ENCODE measurements at regions of chr3 and their contacts with region 1.

Region 1: GRCh38 chr3:148075763-148076716 is 621.7 kb upstream of the AGTR1 start:
- DNase-seq: peak; percentile 44
- H3K4me3 Mint-ChIP-seq: no peak overlapping the region
- H3K27ac Mint-ChIP-seq: no peak overlapping the region
- H3K4me1 Mint-ChIP-seq: no peaks in the 10 kb centered on the region
- H3K27me3 Mint-ChIP-seq: no peaks in the 10 kb centered on the region
- CTCF ChIP-seq: peak; percentile 74

Region 2: DNA sequence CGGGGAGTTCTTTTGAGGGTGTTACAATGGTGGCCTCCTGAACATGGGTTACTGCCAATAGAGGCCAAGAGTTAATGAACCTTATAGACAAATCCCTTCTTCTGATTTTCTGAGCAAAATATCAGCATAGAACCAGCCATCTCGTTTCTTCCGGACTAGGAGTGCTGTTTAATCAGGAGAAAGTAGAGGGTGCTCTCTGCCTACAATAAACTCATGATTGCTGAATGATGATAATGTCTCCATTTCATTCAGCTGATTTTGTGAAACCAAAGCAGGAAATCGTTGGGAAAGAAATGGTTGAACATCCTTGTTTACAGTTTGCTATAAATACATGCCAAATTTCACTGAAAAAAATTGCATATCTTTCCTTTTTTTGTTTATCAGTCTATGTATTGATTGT is 1328.1 kb before region 1 on chr3:
- CTCF ChIA-PET with region 1: no interaction called
- intact Hi-C with region 1: loop called (anchors 2 kb)
- DNase-seq: peak; percentile 20
- H3K4me3 Mint-ChIP-seq: no peak overlapping the region
- H3K27ac Mint-ChIP-seq: no peak overlapping the region
- H3K4me1 Mint-ChIP-seq: no peaks in the 10 kb centered on the region
- H3K27me3 Mint-ChIP-seq: no peaks in the 10 kb centered on the region
- CTCF ChIP-seq: no peak

Region 3: GRCh38 chr3:147191795-147192385 is 884.1 kb before region 1 on chr3:
- CTCF ChIA-PET with region 1: no interaction called
- intact Hi-C with region 1: loop called (anchors 2 kb)
- DNase-seq: peak; percentile 81
- H3K4me3 Mint-ChIP-seq: no peak overlapping the region
- H3K27ac Mint-ChIP-seq: no peak overlapping the region
- H3K4me1 Mint-ChIP-seq: no peaks in the 10 kb centered on the region
- H3K27me3 Mint-ChIP-seq: no peaks in the 10 kb centered on the region
- CTCF ChIP-seq: peak; percentile 97

Region 4: GRCh38 chr3:147507638-147508286 is 568.3 kb before region 1 on chr3:
- CTCF ChIA-PET with region 1: no interaction called
- intact Hi-C with region 1: loop called (anchors 5 kb)
- DNase-seq: no peak
- H3K4me3 Mint-ChIP-seq: no peak overlapping the region
- H3K27ac Mint-ChIP-seq: no peak overlapping the region
- H3K4me1 Mint-ChIP-seq: no peaks in the 10 kb centered on the region
- H3K27me3 Mint-ChIP-seq: no peaks in the 10 kb centered on the region
- CTCF ChIP-seq: no peak

Region 5: DNA sequence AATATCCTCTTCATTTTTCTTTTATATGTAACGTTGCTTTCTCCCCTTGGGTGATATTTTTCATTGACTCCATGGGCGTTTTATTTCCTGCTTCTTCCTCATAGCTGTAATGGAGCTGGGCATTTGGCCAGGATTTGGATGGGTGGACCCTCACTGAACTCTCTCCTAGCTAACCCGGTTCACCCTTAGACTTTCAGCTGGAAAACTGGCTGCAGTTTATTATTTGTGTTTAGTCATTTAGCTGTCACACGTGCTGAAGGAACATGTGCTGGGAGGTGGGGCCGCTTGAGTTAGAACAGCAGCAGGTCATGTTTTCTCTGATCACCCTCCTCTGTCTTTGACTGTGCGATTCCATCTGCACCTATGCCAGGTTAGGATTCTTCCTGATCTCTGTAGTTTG is 259.3 kb before region 1 on chr3:
- CTCF ChIA-PET with region 1: interaction called, 11 read pairs
- intact Hi-C with region 1: loop called (anchors 5 kb)
- DNase-seq: peak; percentile 88
- H3K4me3 Mint-ChIP-seq: peak overlapping the region; percentile 25
- H3K27ac Mint-ChIP-seq: peak overlapping the region; percentile 84
- H3K4me1 Mint-ChIP-seq: peaks cover 14% of the 10 kb centered on the region
- H3K27me3 Mint-ChIP-seq: no peaks in the 10 kb centered on the region
- CTCF ChIP-seq: no peak

Region 6: DNA sequence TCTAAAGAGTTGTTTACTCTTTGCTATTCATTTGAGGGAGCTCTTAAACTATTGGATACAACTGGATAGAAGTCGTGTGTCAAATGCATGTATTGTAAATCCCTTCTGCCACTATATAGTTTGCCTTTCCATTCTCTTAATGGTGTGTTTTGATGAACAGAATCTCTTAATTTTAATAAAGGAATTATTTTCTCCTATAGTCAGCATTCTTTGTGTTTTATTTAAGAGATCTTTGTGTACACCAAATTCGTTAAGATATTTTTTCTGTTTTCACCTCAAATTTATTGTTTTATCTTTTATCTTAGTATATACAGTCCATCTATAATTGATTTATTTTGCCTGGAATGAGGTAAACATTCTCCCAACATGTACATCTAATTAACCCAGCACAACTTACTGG is 70.2 kb after region 1 on chr3:
- CTCF ChIA-PET with region 1: no interaction called
- intact Hi-C with region 1: no loop called
- DNase-seq: no peak
- H3K4me3 Mint-ChIP-seq: no peak overlapping the region
- H3K27ac Mint-ChIP-seq: peak overlapping the region; percentile 14
- H3K4me1 Mint-ChIP-seq: peaks cover 22% of the 10 kb centered on the region
- H3K27me3 Mint-ChIP-seq: no peaks in the 10 kb centered on the region
- CTCF ChIP-seq: no peak

Region 7: GRCh38 chr3:148366743-148367410 is 290.8 kb after region 1 on chr3:
- CTCF ChIA-PET with region 1: interaction called, 8 read pairs
- intact Hi-C with region 1: loop called (anchors 1 kb)
- DNase-seq: no peak
- H3K4me3 Mint-ChIP-seq: no peak overlapping the region
- H3K27ac Mint-ChIP-seq: no peak overlapping the region
- H3K4me1 Mint-ChIP-seq: no peaks in the 10 kb centered on the region
- H3K27me3 Mint-ChIP-seq: no peaks in the 10 kb centered on the region
- CTCF ChIP-seq: peak; percentile 51